ENCODE measurements at regions of chr12 and their contacts with region 1.

Region 1: GRCh38 chr12:6367065-6367968 is 8.0 kb downstream of the SCNN1A start:
- DNase-seq: peak; percentile 87
- H3K4me3 ChIP-seq: no peak overlapping the region
- H3K27ac ChIP-seq: peak overlapping the region; percentile 65
- H3K4me1 ChIP-seq: peaks cover 33% of the 10 kb centered on the region
- CTCF ChIP-seq: peak; percentile 82

Region 2: GRCh38 chr12:4829161-4829792 is 1538.0 kb before region 1 on chr12:
- CTCF ChIA-PET with region 1: no interaction called
- POLR2A ChIA-PET with region 1: no interaction called
- intact Hi-C with region 1: loop called (anchors 5 kb)
- DNase-seq: peak; percentile 90
- H3K4me3 ChIP-seq: peak overlapping the region; percentile 82
- H3K27ac ChIP-seq: peak overlapping the region; percentile 98
- H3K4me1 ChIP-seq: peaks cover 54% of the 10 kb centered on the region
- CTCF ChIP-seq: no peak

Region 3: GRCh38 chr12:6323340-6323994 is 43.9 kb before region 1 on chr12:
- CTCF ChIA-PET with region 1: interaction called, 9 read pairs
- POLR2A ChIA-PET with region 1: interaction called, 3 read pairs
- intact Hi-C with region 1: loop called (anchors 1 kb)
- DNase-seq: peak; percentile 77
- H3K4me3 ChIP-seq: peak overlapping the region; percentile 34
- H3K27ac ChIP-seq: peak overlapping the region; percentile 59
- H3K4me1 ChIP-seq: peaks cover 30% of the 10 kb centered on the region
- CTCF ChIP-seq: peak; percentile 88

Region 4: DNA sequence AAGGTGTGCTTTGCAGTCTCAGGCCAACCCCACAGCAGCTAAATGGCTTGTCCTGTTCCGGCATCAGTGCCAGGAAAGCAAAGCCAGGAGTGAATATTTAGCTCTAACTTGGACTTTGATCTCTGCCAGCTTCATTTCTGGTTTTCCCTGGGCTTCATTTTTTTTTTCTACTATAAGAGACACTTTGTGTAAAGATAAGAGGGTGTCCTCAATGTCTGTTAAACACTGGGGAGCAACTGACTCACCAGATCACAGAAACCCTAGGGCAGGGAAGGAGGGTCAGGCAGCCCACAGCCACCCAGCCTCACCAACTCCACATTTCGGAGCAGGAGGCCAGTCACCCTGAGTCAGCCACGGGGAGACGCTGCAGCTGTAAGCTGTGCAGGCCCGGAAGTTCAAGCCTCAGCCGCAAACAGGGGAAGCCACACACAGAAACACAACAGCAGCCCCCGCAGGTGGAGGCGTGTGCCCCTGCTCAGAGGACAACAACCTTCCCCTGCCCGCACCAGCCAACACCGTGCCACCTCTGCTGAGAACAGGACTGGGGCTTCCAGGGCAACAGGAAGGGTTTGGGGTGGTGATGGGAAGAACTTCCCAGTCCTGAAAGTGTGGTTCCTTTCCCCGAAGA is 31.8 kb before region 1 on chr12:
- CTCF ChIA-PET with region 1: interaction called, 9 read pairs
- POLR2A ChIA-PET with region 1: interaction called, 55 read pairs
- intact Hi-C with region 1: loop called (anchors 1 kb)
- DNase-seq: peak; percentile 90
- H3K4me3 ChIP-seq: peak overlapping the region; percentile 53
- H3K27ac ChIP-seq: peak overlapping the region; percentile 80
- H3K4me1 ChIP-seq: peaks cover 72% of the 10 kb centered on the region
- CTCF ChIP-seq: peak; percentile 89

Region 5: DNA sequence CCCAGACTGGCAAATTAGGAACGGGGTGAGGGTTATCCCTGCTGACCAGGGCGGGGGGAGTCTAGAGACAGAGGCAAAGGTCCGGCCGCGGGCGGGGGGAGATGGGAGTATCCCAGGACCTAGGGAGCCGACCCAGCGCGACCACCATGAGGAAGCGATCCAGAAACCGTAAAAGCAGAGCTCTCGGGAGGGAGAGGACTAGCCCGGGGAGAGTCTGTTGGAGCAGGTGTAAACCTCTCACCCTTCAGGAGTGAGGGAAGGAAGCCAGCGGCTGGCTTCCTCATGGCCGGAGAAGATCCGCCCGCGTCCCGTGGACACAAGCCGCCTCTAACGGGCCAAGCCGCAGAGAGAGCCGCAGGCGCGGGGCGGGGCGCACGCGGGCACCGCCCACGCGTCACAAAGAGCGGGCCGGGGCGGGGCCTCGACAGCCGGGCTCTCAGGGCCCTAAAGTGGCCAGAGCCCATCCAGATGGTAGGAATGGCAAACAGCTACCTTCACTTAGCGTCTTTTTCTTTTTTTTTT is 279.8 kb after region 1 on chr12 and contains the start of gene ACRBP:
- CTCF ChIA-PET with region 1: no interaction called
- POLR2A ChIA-PET with region 1: no interaction called
- intact Hi-C with region 1: no loop called
- DNase-seq: peak; percentile 80
- H3K4me3 ChIP-seq: peak within 1 kb of the TSS; percentile 72
- H3K27ac ChIP-seq: no peak within 1 kb of the TSS
- H3K4me1 ChIP-seq: peaks cover 36% of the 10 kb centered on the region
- CTCF ChIP-seq: no peak
- total RNA-seq, gene ACRBP: 3.6 and 4.4 TPM in 2 replicates